ENCODE measurements at regions of chr1 and their contacts with region 1.

Region 1: DNA sequence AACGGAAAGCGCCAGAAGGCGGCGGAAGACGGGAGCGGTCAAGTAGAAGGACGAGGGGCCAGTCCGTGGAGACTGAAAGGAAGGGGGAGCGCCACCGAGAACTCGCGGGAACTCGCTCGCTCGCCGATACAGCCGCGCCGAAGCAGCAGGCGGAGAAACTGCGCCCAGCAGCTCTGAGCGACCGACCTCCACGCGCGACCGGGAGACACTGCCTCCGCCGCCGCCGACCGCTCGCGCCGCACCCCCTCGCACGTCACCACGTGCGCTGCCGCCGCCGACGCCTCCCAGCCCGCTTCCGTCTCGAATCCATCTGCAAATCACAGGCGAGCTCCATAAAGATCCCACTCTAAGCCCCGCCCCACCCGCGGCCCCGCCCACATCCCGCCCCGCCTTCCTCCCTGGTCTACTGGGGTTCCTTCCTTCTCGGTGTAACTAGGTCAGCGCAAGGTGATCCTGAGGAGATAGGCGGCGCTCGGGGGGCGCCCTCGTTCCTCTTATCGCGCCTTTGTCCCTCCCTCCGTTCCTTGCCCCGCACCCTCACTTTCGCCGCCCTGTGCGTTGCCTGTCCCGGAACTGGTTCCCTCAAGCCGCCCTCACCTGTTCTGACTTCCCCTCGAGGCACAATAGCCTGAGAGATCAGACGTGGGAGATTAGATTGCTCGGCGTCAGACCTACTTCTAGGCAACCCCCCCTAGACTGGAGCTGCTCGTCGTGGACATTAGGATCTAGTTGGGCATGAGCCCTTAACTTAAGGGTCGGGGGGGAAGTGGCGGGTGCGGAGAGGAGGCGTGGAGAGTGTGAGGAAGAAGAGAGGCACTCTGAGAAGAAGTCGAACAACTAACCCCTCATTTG is at the start of gene IVNS1ABP:
- DNase-seq: peak; percentile 95
- H3K4me3 ChIP-seq: peak within 1 kb of the TSS; percentile 87
- H3K27ac ChIP-seq: peak within 1 kb of the TSS; percentile 83
- H3K4me1 ChIP-seq: peaks cover 40% of the 10 kb centered on the region
- CTCF ChIP-seq: peak; percentile 67
- total RNA-seq, gene IVNS1ABP: 50.7 and 54.0 TPM in 2 replicates

Region 2: GRCh38 chr1:184051485-184052193 is 1265.6 kb before region 1 on chr1 and contains the start of gene TSEN15:
- CTCF ChIA-PET with region 1: no interaction called
- POLR2A ChIA-PET with region 1: no interaction called
- intact Hi-C with region 1: loop called (anchors 10 kb)
- DNase-seq: peak; percentile 94
- H3K4me3 ChIP-seq: peak within 1 kb of the TSS; percentile 73
- H3K27ac ChIP-seq: peak within 1 kb of the TSS; percentile 80
- H3K4me1 ChIP-seq: peaks cover 15% of the 10 kb centered on the region
- CTCF ChIP-seq: no peak; the same call in 1 of the 2 replicates
- total RNA-seq, gene TSEN15: 39.8 and 42.5 TPM in 2 replicates

Region 3: DNA sequence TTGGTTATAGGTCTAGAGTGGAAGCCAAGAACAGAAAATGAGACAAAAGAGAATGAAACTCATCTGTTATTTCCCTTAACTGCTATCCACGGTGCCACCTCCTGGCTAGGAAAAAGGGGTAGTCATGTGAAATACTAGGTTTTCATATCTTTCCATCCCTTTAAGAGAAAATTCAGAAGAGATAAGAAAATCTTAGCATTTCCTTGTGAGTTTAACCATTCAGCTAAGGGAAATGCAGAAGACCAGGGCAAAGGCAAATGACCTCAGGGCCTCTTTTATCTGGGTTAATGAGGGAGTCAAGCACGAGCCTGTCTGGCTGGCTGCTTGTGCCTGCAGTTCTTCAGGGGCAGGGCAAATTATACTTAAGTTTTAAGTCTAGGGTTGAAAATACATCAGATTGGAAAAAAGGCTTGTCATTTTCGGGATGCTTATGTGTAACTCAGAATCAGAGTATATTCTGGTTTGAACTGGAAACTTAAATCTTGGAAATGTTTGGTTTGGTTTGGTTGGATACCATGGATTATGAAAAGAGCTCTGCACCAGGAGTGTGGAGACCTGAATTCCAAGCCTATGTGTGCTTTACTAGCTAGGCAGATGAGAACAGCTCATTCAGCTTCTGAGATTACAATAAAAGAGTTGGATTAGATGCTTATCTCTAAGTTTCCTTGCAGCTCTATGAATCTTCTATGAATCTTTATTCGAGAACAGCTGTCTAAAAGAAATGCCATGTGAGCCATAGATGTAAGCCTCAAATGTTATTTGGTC is 362.8 kb before region 1 on chr1:
- CTCF ChIA-PET with region 1: no interaction called
- POLR2A ChIA-PET with region 1: no interaction called
- intact Hi-C with region 1: no loop called
- DNase-seq: no peak
- H3K4me3 ChIP-seq: no peak overlapping the region
- H3K27ac ChIP-seq: no peak overlapping the region
- H3K4me1 ChIP-seq: no peaks in the 10 kb centered on the region
- CTCF ChIP-seq: no peak

Region 4: DNA sequence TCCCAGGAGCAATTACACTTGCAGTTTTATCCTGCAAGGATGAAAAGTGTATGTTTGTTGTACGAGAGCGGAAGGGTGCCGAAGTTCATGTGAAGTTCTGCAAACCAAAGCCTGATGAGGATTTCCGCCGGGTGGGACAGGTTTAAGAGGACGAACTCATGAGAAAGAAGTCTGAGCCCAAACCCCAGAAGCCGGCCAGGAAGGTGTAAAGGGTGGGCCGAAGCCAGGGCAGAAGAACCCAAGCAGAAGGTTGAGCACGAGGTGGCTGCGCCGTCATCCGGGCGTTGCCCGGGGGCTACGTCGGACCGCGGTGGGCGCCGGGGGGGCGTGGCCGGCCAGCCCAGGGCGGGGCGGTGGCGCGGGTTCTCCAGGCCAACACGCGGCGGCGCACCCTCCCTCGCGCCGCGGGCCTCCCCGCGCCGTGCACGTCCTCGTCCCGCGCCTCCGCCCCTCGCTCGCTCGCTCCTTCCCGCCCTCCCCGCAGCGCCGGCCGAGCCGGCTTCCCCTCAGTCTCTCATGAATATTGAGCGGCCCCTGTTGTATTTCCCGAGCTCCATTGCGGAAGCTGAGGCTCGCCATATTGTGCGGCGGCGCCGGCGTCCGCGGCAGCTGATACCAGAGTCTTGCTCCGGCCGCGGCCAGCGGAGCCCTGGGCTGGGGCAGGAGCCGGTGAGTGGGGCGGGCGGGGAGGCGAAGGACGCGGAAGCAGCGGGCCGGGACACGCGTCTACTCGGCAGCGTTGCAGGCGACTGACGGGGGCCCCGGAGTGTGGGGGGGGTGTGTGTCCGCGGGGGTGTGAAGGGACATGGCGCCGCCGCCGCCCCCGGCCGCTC is 272.1 kb before region 1 on chr1 and contains the start of gene RNF2:
- CTCF ChIA-PET with region 1: no interaction called
- POLR2A ChIA-PET with region 1: interaction called, 5 read pairs
- intact Hi-C with region 1: loop called (anchors 2 kb)
- DNase-seq: peak; percentile 87
- H3K4me3 ChIP-seq: peak within 1 kb of the TSS; percentile 87
- H3K27ac ChIP-seq: no peak within 1 kb of the TSS
- H3K4me1 ChIP-seq: peaks cover 11% of the 10 kb centered on the region
- CTCF ChIP-seq: no peak
- total RNA-seq, gene RNF2: 17.5 and 17.8 TPM in 2 replicates

Region 5: GRCh38 chr1:185426848-185427247 is 109.6 kb after region 1 on chr1:
- CTCF ChIA-PET with region 1: no interaction called
- POLR2A ChIA-PET with region 1: no interaction called
- intact Hi-C with region 1: no loop called
- DNase-seq: no peak
- H3K4me3 ChIP-seq: no peak overlapping the region
- H3K27ac ChIP-seq: no peak overlapping the region
- H3K4me1 ChIP-seq: no peaks in the 10 kb centered on the region
- CTCF ChIP-seq: no peak

Region 6: DNA sequence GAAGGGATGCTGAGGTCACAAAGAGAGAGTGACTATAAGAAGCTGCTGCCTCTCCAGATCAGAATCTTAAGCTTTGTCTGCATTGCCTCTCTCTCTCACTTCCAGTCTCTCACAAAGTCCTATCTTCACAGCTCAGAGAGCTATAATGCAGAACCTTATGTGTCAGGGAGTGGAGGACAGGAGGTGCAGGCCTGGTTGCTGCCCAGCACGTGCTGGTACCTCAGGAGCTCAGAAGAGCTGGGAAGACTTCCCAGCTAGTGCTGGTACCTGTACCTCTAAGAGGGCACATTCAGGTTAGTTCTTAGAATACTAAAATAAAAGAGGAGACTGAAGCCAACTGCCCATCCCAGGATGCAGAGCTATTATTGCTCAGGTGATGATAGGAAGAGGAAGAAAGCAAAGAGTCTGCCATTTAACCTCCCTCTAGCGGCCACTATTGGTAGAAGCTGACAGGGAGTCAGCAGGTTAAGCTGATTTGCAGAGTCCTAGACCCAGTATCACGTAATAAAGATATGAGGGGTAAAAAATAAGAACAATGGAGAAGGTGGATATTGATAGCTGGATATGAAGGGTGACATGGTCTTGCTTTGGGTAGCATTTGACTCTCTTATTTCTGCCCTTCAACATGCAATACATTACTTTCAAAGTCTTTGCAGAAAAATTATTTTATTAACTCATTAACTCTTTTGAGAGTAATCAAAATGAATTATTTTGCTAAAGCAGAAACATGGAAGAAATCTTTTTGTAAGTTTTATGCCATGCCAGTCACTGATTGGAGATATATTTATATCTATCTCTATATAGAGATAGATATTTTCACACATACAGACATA is 278.8 kb after region 1 on chr1:
- CTCF ChIA-PET with region 1: interaction called, 5 read pairs
- POLR2A ChIA-PET with region 1: interaction called, 3 read pairs
- intact Hi-C with region 1: loop called (anchors 5 kb)
- DNase-seq: peak; percentile 44
- H3K4me3 ChIP-seq: no peak overlapping the region
- H3K27ac ChIP-seq: no peak overlapping the region
- H3K4me1 ChIP-seq: no peaks in the 10 kb centered on the region
- CTCF ChIP-seq: peak; percentile 78

Region 7: DNA sequence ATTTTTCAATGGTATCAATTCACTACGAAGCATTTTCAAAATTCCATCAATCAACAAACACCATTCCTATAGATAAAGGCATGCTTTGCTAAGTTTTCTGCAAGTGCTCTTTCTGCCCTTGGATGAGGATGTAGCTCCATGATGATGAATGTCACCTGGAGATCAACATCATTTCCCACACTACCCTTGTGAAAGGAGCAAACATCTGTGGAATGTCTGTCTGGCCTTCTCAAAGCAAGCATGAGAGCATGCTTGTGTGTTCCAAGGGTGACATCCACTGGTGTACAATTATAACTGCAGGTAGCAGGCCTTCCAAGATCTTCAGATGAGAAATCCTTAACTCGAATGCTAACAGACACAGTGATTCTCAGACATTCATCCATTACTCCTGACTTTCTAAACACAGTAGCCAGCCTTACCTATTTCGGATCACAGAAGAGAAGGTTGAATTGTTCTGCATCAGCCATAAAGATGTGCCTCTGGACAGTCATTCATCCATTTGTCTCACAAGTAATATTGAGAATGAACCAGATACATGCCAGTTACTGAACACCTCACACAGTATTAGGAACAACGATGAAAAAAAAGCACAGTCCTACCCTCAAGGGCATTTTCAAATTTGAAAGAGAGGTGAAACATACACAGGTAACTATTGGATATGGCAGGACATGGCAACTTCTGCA is 895.4 kb after region 1 on chr1:
- CTCF ChIA-PET with region 1: no interaction called
- POLR2A ChIA-PET with region 1: no interaction called
- intact Hi-C with region 1: loop called (anchors 5 kb)
- DNase-seq: peak; percentile 81
- H3K4me3 ChIP-seq: no peak overlapping the region
- H3K27ac ChIP-seq: no peak overlapping the region
- H3K4me1 ChIP-seq: peaks cover 11% of the 10 kb centered on the region
- CTCF ChIP-seq: peak; percentile 94

Measured in OCI-LY7 (cell line).